Mammary epithelial cell (primary cell): ENCODE measurements at regions of chr6 and their contacts with region 1.

Region 1: GRCh38 chr6:28474441-28475219 is 31.3 kb upstream of the ZSCAN23 start:
- DNase-seq: peak; percentile 82
- H3K4me3 ChIP-seq: peak overlapping the region; percentile 41 to 84 (median 67)
- H3K27ac ChIP-seq: no peak overlapping the region
- H3K4me1 ChIP-seq: no peaks in the 10 kb centered on the region
- H3K27me3 ChIP-seq: no peaks in the 10 kb centered on the region
- CTCF ChIP-seq: no peak

Region 2: GRCh38 chr6:28442586-28442985 is 32.0 kb before region 1 on chr6:
- CTCF ChIA-PET with region 1: no interaction called
- dilution Hi-C with region 1: no loop called
- in situ Hi-C with region 1: no loop called
- intact Hi-C with region 1: no loop called
- DNase-seq: no peak
- H3K4me3 ChIP-seq: peak overlapping the region; percentile 68 to 85 (median 75)
- H3K27ac ChIP-seq: peak overlapping the region; percentile 66
- H3K4me1 ChIP-seq: peaks cover 19% of the 10 kb centered on the region
- H3K27me3 ChIP-seq: no peaks in the 10 kb centered on the region
- CTCF ChIP-seq: no peak

Region 3: GRCh38 chr6:28816909-28817807 is 342.5 kb after region 1 on chr6:
- CTCF ChIA-PET with region 1: no interaction called
- dilution Hi-C with region 1: no loop called
- in situ Hi-C with region 1: no loop called
- intact Hi-C with region 1: loop called (anchors 10 kb)
- DNase-seq: peak; percentile 85
- H3K4me3 ChIP-seq: peak overlapping the region; percentile 22 to 48 (median 35)
- H3K27ac ChIP-seq: no peak overlapping the region
- H3K4me1 ChIP-seq: peaks cover 7% of the 10 kb centered on the region
- H3K27me3 ChIP-seq: no peaks in the 10 kb centered on the region
- CTCF ChIP-seq: no peak